ENCODE measurements at regions of chr4 and their contacts with region 1.

Region 1: DNA sequence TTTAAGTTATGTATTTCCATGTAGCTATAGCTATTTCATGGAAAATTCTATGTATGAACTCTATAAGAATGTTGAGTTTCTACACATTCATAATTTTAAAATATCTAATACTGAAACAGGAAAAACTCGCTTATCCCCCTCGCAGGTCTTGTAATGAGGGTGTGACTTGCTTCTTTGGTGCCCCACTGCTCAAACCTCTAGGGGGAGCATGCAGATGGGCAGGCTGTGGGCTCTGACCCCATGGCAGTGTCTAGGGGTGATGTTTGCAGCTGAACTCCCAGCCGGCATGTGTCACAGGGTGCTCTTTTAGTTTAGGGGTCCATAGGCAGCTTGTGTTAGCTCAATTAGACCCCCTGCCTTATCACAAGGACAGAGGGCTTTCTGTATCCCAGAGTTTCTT is 1825.7 kb upstream of the ADGRL3 start:
- DNase-seq: no peak
- H3K4me3 ChIP-seq: no peak overlapping the region
- H3K4me3 Mint-ChIP-seq: no peak overlapping the region
- H3K27ac Mint-ChIP-seq: no peak overlapping the region
- H3K4me1 ChIP-seq: no peaks in the 10 kb centered on the region
- H3K4me1 Mint-ChIP-seq: no peaks in the 10 kb centered on the region
- H3K27me3 ChIP-seq: no peaks in the 10 kb centered on the region
- H3K27me3 Mint-ChIP-seq: no peaks in the 10 kb centered on the region
- CTCF ChIP-seq: no peak

Region 2: GRCh38 chr4:59122626-59123025 is 251.8 kb before region 1 on chr4:
- CTCF ChIA-PET with region 1: no interaction called
- POLR2A ChIA-PET with region 1: no interaction called
- intact Hi-C with region 1: no loop called
- DNase-seq: no peak
- H3K4me3 ChIP-seq: no peak overlapping the region
- H3K4me3 Mint-ChIP-seq: no peak overlapping the region
- H3K27ac Mint-ChIP-seq: no peak overlapping the region
- H3K4me1 ChIP-seq: no peaks in the 10 kb centered on the region
- H3K4me1 Mint-ChIP-seq: no peaks in the 10 kb centered on the region
- H3K27me3 ChIP-seq: no peaks in the 10 kb centered on the region
- H3K27me3 Mint-ChIP-seq: peaks cover 3% of the 10 kb centered on the region
- CTCF ChIP-seq: no peak

Region 3: DNA sequence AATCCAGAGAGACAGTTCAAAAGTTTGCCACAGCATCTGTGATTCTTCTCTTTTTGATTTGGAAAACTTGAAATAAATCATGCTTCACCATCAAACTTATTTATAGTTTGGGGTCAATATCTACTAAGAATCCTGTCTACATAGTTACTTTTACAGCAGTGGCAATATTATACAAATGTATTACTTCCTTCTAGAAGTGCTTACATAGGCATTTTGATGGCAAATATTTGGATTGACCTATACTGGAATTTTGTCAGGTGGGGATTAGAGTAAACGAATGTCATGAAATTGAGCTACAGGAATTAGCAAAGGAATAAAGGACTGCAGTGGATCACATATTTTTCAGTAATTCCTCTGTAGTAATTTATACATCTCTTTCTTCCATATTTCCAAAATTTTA is 59.8 kb before region 1 on chr4:
- CTCF ChIA-PET with region 1: no interaction called
- POLR2A ChIA-PET with region 1: no interaction called
- intact Hi-C with region 1: no loop called
- DNase-seq: no peak
- H3K4me3 ChIP-seq: no peak overlapping the region
- H3K4me3 Mint-ChIP-seq: no peak overlapping the region
- H3K27ac Mint-ChIP-seq: no peak overlapping the region
- H3K4me1 ChIP-seq: no peaks in the 10 kb centered on the region
- H3K4me1 Mint-ChIP-seq: no peaks in the 10 kb centered on the region
- H3K27me3 ChIP-seq: no peaks in the 10 kb centered on the region
- H3K27me3 Mint-ChIP-seq: no peaks in the 10 kb centered on the region
- CTCF ChIP-seq: no peak

Region 4: DNA sequence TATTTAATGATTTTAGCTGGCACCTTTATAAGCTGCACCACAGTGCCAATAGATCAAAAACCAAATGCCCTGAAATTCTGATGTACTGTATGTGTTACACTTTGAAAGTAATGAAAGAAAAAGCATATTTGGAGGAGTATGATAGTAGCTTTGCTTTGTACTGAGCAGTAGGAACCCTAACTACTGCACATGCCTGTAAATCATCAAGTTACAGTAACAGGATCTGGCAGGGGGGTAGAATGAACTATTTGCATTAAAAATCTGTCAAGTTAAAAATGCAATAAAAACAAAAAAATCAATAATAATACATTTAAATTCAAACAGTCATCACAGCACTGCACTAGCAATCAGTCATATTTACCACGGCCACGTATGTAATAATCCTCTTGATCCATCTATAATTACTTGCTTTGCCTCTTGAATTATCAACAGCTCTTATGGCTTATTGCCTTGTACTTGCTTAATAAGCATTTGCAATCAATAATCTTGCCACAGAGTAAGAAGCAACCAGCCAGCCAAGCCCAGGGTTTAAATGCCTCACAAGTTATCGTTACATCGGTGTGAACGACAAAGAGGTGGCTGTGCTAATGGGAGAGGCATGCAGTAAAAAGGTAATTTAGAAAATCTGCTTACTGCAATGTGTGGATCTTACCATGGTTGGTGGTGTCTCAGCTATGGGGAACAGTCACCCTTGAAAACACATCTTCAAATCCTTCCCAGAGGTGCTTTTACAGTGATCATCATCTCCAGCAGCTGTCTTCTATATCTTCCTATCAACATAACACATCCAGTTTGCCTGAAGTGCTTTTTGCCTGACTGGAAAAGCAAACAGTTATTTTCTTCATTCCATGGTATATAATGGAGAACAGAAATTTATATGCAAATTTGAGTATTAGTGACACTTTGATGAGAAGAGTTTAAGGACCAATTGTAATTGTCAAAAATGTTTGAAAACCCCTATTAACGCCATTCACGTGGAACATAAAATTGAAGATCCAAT is 13.6 kb after region 1 on chr4:
- CTCF ChIA-PET with region 1: no interaction called
- POLR2A ChIA-PET with region 1: no interaction called
- intact Hi-C with region 1: loop called (anchors 1 kb)
- DNase-seq: no peak
- H3K4me3 ChIP-seq: no peak overlapping the region
- H3K4me3 Mint-ChIP-seq: no peak overlapping the region
- H3K27ac Mint-ChIP-seq: no peak overlapping the region
- H3K4me1 ChIP-seq: no peaks in the 10 kb centered on the region
- H3K4me1 Mint-ChIP-seq: no peaks in the 10 kb centered on the region
- H3K27me3 ChIP-seq: no peaks in the 10 kb centered on the region
- H3K27me3 Mint-ChIP-seq: peaks cover 2% of the 10 kb centered on the region
- CTCF ChIP-seq: no peak

Region 5: GRCh38 chr4:59612235-59612634 is 237.8 kb after region 1 on chr4:
- CTCF ChIA-PET with region 1: no interaction called
- POLR2A ChIA-PET with region 1: no interaction called
- intact Hi-C with region 1: no loop called
- DNase-seq: no peak
- H3K4me3 ChIP-seq: no peak overlapping the region
- H3K4me3 Mint-ChIP-seq: no peak overlapping the region
- H3K27ac Mint-ChIP-seq: no peak overlapping the region
- H3K4me1 ChIP-seq: no peaks in the 10 kb centered on the region
- H3K4me1 Mint-ChIP-seq: no peaks in the 10 kb centered on the region
- H3K27me3 ChIP-seq: no peaks in the 10 kb centered on the region
- H3K27me3 Mint-ChIP-seq: peaks cover 3% of the 10 kb centered on the region
- CTCF ChIP-seq: no peak